Activated T-helper 2 cell treated with anti-CD3 and anti-CD28 coated beads, Interferon-gamma antibody, Interleukin-2, Interleukin-4, amounts not matched to agents 10 μg/mL and 5 μg/mL and 100 μg/mL, durations not matched to agents 14 hours and 24 hours and 36 hours (primary cell): ENCODE measurements at regions of chr5 and their contacts with region 1.

Region 1: DNA sequence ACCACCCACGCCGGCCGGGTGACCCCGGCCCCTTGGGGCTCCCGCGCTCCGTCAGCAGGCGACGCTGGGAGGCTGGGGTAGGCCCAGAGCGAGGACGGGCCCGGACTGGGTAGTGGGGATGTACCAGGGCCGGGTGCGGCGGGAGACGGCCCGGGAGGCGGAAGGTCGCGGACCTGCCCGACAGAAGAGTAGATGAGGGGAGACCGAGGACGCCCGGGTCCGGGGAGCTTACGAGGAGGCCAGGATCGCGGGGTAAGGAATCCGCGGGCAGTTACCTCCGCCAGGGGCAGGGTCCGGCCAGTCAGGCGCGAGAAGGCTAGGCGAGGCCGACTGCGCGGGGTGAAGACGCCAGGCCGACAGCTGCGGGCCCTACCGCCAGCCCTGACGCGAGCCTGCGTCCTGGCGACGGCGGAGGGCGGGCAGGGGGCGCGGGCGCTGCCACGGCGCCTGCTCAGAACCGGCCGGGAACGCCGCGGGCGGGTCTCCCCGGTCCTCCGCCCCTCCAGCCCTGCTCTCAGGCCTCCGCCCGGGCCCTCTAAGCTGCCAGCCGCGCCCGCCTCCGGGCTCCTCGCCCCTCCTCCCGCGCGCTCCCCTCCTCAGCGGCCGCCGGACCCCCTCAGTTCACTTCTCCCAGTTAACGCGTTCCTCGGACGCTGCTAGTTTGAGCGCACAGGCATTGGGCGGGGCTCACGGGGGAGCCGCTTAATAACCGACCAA is at the start of gene CPLANE1:
- DNase-seq: peak; percentile 55
- H3K4me3 Mint-ChIP-seq: peak within 1 kb of the TSS; percentile 88
- H3K27ac Mint-ChIP-seq: peak within 1 kb of the TSS; percentile 77
- H3K4me1 Mint-ChIP-seq: peaks cover 6% of the 10 kb centered on the region
- H3K27me3 Mint-ChIP-seq: no peaks in the 10 kb centered on the region
- total RNA-seq, gene CPLANE1: 7.7 and 9.1 TPM in 2 replicates

Region 2: GRCh38 chr5:37146896-37147295 is 102.2 kb before region 1 on chr5:
- intact Hi-C with region 1: no loop called
- DNase-seq: no peak
- H3K4me3 Mint-ChIP-seq: no peak overlapping the region
- H3K27ac Mint-ChIP-seq: no peak overlapping the region
- H3K4me1 Mint-ChIP-seq: no peaks in the 10 kb centered on the region
- H3K27me3 Mint-ChIP-seq: no peaks in the 10 kb centered on the region

Region 3: GRCh38 chr5:37370864-37371726 is 122.0 kb after region 1 on chr5 and contains the start of gene NUP155:
- intact Hi-C with region 1: loop called (anchors 2 kb)
- DNase-seq: peak; percentile 86
- H3K4me3 Mint-ChIP-seq: peak within 1 kb of the TSS; percentile 93
- H3K27ac Mint-ChIP-seq: peak within 1 kb of the TSS; percentile 92
- H3K4me1 Mint-ChIP-seq: peaks cover 22% of the 10 kb centered on the region
- H3K27me3 Mint-ChIP-seq: no peaks in the 10 kb centered on the region
- total RNA-seq, gene NUP155: 66.8 and 69.8 TPM in 2 replicates